ENCODE measurements at regions of chr12 and their contacts with region 1.

Region 1: DNA sequence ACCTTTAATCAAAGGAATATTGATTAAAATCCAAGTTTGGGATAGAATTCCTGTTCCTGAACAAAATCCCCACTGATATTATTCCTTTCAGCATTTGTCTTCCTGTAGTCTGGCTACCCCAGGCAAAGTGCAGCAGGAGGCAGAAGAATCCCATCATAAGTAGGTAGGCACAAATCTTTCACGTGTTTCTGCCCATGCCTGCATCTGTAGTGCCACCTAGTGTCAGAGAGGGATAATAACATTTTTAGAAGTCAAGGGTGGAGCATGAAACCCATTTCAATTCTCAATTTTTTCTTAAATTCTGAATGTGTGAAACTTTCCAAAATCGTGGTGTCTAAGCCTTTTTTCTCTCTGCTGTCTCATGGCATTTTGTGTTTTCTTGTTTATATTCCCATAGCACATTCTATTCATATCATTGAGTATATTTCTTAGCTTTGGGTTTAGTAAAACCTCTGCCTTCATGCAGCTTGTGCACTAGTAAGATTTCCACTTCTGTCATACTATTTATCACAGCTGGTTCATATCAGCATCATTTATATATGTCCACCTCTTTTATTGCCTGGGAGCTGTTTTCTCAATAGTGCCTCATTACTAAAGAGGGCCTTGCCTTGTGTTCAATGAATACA is 47.8 kb upstream of the RERG start:
- DNase-seq: peak; percentile 34 to 51 (median 36)
- ATAC-seq: peak; percentile 61; the same call in 2 of the 3 replicates
- H3K4me3 ChIP-seq: no peak overlapping the region
- H3K27ac ChIP-seq: no peak overlapping the region
- H3K4me1 ChIP-seq: no peaks in the 10 kb centered on the region
- H3K27me3 ChIP-seq: no peaks in the 10 kb centered on the region
- CTCF ChIP-seq: peak; percentile 62 to 74 (median 69)
- EP300 ChIP-seq: no peak
- POLR2A ChIP-seq: no peak
- RAD21 ChIP-seq: peak; percentile 63 to 70

Region 2: GRCh38 chr12:15001733-15002382 is 267.2 kb before region 1 on chr12:
- CTCF ChIA-PET with region 1: no interaction called
- POLR2A ChIA-PET with region 1: no interaction called
- in situ Hi-C with region 1: no loop called
- intact Hi-C with region 1: loop called (anchors 10 kb)
- DNase-seq: no peak
- ATAC-seq: no peak
- H3K4me3 ChIP-seq: no peak overlapping the region
- H3K27ac ChIP-seq: no peak overlapping the region
- H3K4me1 ChIP-seq: no peaks in the 10 kb centered on the region
- H3K27me3 ChIP-seq: 0 out of 5 replicates have a peak, but pooled peaks cover 0 to 4% of the 10 kb centered on the region in 2 experiments
- CTCF ChIP-seq: no peak
- EP300 ChIP-seq: no peak
- POLR2A ChIP-seq: no peak
- RAD21 ChIP-seq: no peak

Measured in K562 (cell line).